Natural killer cell (primary cell): ENCODE measurements at regions of chr12 and their contacts with region 1.

Region 1: GRCh38 chr12:55738123-55739024 is 4.5 kb upstream of the GDF11 start:
- DNase-seq: peak; percentile 42 to 92
- ATAC-seq: peak; percentile 62 to 76 (median 65)
- H3K4me3 ChIP-seq: peak overlapping the region; percentile 52
- H3K4me3 Mint-ChIP-seq: peak overlapping the region; percentile 88
- H3K27ac ChIP-seq: peak overlapping the region; percentile 65
- H3K27ac Mint-ChIP-seq: peak overlapping the region; percentile 86 to 94
- H3K4me1 ChIP-seq: peaks cover 26% of the 10 kb centered on the region
- H3K4me1 Mint-ChIP-seq: peaks cover 36 to 38% of the 10 kb centered on the region in 2 donors
- H3K27me3 ChIP-seq: no peaks in the 10 kb centered on the region
- H3K27me3 Mint-ChIP-seq: no peaks in the 10 kb centered on the region
- CTCF ChIP-seq: peak; percentile 95

Region 2: GRCh38 chr12:55700255-55701018 is 37.9 kb before region 1 on chr12:
- intact Hi-C with region 1: no loop called
- DNase-seq: no peak
- ATAC-seq: no peak
- H3K4me3 ChIP-seq: no peak overlapping the region
- H3K4me3 Mint-ChIP-seq: no peak overlapping the region
- H3K27ac ChIP-seq: no peak overlapping the region
- H3K27ac Mint-ChIP-seq: no peak overlapping the region
- H3K4me1 ChIP-seq: no peaks in the 10 kb centered on the region
- H3K4me1 Mint-ChIP-seq: no peaks in the 10 kb centered on the region
- H3K27me3 ChIP-seq: no peaks in the 10 kb centered on the region
- H3K27me3 Mint-ChIP-seq: no peaks in the 10 kb centered on the region
- CTCF ChIP-seq: no peak

Region 3: DNA sequence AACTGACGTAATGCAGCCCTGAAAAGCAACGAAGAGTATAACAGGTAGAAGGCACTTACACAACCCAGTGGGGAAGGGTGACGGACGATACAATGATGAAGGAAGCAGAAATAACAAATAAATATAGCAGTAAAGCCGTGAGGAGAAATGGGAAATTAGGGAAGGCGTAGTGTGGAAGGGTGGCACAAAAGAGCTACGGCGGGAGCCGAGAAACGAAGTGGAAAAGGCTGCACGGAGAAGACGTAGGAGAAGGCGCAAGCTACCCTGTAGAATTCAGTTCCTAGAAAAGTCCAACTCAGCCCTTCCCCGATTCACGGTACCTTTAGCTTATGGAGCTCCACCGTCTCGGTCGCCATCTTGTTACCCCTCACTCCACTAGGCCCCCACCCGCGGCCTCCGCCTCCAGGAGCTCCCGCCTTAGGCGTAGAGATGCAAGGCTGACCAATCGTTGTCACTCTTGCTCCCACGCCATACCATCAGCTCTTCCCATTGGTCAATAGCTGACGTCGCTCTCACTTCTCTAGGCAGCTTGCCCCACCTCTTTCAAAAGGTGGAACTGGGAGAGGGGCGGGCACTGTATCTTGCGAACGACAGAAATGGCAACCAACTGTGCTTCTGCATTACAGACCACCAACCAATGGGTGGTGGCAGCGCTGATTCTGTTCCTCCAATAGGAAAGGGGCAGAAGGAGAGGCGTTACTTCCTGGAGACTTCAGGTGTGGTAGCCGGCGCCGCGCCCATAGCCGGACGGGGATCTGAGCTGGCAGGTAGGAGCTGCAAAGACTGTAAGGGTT is 79.2 kb after region 1 on chr12 and contains the starts of genes ORMDL2 and SARNP:
- intact Hi-C with region 1: loop called (anchors 5 kb)
- DNase-seq: peak; percentile 88 to 99
- ATAC-seq: peak; percentile 91 to 97 (median 92)
- H3K4me3 ChIP-seq: peak within 1 kb of the TSS; percentile 85
- H3K4me3 Mint-ChIP-seq: no peak within 1 kb of the TSS
- H3K27ac ChIP-seq: peak within 1 kb of the TSS; percentile 78
- H3K27ac Mint-ChIP-seq: no peak within 1 kb of the TSS
- H3K4me1 ChIP-seq: peaks cover 22% of the 10 kb centered on the region
- H3K4me1 Mint-ChIP-seq: peaks cover 22 to 29% of the 10 kb centered on the region in 2 donors
- H3K27me3 ChIP-seq: no peaks in the 10 kb centered on the region
- H3K27me3 Mint-ChIP-seq: no peaks in the 10 kb centered on the region
- CTCF ChIP-seq: no peak
- total RNA-seq, gene ORMDL2: 21.3 to 36.3 (median 23.1) TPM
- total RNA-seq, gene SARNP: 50.5 to 57.0 (median 51.2) TPM

Region 4: GRCh38 chr12:55940065-55940732 is 201.8 kb after region 1 on chr12:
- intact Hi-C with region 1: loop called (anchors 1 kb)
- DNase-seq: peak; percentile 76 to 93
- ATAC-seq: peak; percentile 97 to 99 (median 99)
- H3K4me3 ChIP-seq: no peak overlapping the region
- H3K4me3 Mint-ChIP-seq: no peak overlapping the region
- H3K27ac ChIP-seq: peak overlapping the region; percentile 16
- H3K27ac Mint-ChIP-seq: peak overlapping the region in 1 of 2 donors; percentile 33
- H3K4me1 ChIP-seq: peaks cover 11% of the 10 kb centered on the region
- H3K4me1 Mint-ChIP-seq: peaks cover 10 to 12% of the 10 kb centered on the region in 2 donors
- H3K27me3 ChIP-seq: no peaks in the 10 kb centered on the region
- H3K27me3 Mint-ChIP-seq: no peaks in the 10 kb centered on the region
- CTCF ChIP-seq: peak; percentile 82

Region 5: GRCh38 chr12:56041552-56042429 is 303.4 kb after region 1 on chr12 and contains the start of gene RPS26:
- intact Hi-C with region 1: loop called (anchors 2 kb)
- DNase-seq: peak; percentile 85 to 99
- ATAC-seq: peak; percentile 89 to 97 (median 93)
- H3K4me3 ChIP-seq: peak within 1 kb of the TSS; percentile 83
- H3K4me3 Mint-ChIP-seq: peak within 1 kb of the TSS; percentile 99
- H3K27ac ChIP-seq: peak within 1 kb of the TSS; percentile 86
- H3K27ac Mint-ChIP-seq: peak within 1 kb of the TSS; percentile 93 to 98
- H3K4me1 ChIP-seq: peaks cover 14% of the 10 kb centered on the region
- H3K4me1 Mint-ChIP-seq: peaks cover 24 to 25% of the 10 kb centered on the region in 2 donors
- H3K27me3 ChIP-seq: no peaks in the 10 kb centered on the region
- H3K27me3 Mint-ChIP-seq: no peaks in the 10 kb centered on the region
- CTCF ChIP-seq: no peak
- total RNA-seq, gene RPS26: 29.5 to 50.3 (median 35.5) TPM

Region 6: GRCh38 chr12:56189176-56189917 is 451.0 kb after region 1 on chr12 and contains the start of gene SMARCC2:
- intact Hi-C with region 1: loop called (anchors 10 kb)
- DNase-seq: peak; percentile 83 to 94
- ATAC-seq: peak; percentile 81 to 94 (median 83)
- H3K4me3 ChIP-seq: peak within 1 kb of the TSS; percentile 96
- H3K4me3 Mint-ChIP-seq: peak within 1 kb of the TSS; percentile 99
- H3K27ac ChIP-seq: peak within 1 kb of the TSS; percentile 96
- H3K27ac Mint-ChIP-seq: peak within 1 kb of the TSS; percentile 98
- H3K4me1 ChIP-seq: peaks cover 27% of the 10 kb centered on the region
- H3K4me1 Mint-ChIP-seq: peaks cover 43 to 55% of the 10 kb centered on the region in 2 donors
- H3K27me3 ChIP-seq: no peaks in the 10 kb centered on the region
- H3K27me3 Mint-ChIP-seq: no peaks in the 10 kb centered on the region
- CTCF ChIP-seq: peak; percentile 66
- total RNA-seq, gene SMARCC2: 205 to 232 (median 210) TPM